ENCODE measurements at regions of chr4 and their contacts with region 1.

Region 1: DNA sequence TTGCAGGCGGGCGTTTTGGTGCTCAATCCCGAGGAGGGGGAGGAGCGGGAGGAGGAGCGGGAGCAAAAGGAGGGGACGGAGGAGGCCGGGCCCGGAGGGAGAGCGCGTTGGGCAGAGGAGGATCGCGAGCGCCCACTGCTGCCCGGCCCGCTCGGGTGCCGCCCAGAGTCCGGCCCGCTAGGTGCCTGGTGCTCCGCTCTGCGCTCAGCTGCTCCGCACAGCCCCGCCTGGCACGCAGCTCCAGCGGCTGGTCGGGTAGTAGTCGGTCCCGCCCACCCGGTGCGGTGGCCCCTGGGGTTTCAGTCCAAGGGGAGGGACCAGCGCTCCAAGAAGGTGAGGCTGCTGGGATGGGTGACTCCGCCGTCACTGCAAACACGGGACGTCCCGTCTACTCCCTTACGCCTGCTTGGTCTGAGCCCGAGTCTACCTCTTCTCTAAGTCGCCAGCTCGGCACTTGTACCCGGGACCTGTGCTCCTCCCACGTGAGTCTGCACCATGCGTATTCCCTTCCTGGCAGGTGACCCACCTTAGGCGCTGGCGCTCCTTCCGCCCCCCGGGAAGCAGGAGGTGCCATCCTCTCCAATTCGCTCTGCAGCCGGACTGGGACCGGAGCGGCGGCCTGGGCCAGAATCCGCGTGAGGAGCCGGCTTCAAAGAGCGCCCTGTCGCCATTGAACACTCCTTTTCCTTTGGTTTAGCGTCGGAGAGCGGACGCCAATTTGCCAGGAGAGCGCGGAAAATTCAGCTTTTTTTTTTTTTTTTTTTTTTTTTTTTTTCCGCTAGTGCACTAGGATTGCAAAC is 405 bp upstream of the HS3ST1 start:
- DNase-seq: peak; percentile 54 to 94 (median 79)
- H3K4me3 ChIP-seq: peak overlapping the region; percentile 37 to 85 (median 72)
- H3K27ac ChIP-seq: peak overlapping the region in 51 of 59 donors; percentile 21 to 90 (median 80)
- H3K27me3 ChIP-seq: peaks cover 0 to 28% (median 6%) of the 10 kb centered on the region in 45 donors
- CTCF ChIP-seq: peak; percentile 38 to 81 (median 64)

Region 2: GRCh38 chr4:10582059-10582686 is 846.9 kb before region 1 on chr4:
- intact Hi-C with region 1: loop called (anchors 5 to 10 kb)
- DNase-seq: peak in 8 of 10 donors; percentile 17 to 73 (median 50)
- H3K4me3 ChIP-seq: no peak overlapping the region
- H3K27ac ChIP-seq: no peak overlapping the region
- H3K27me3 ChIP-seq: peaks cover 0 to 6% (median 0%) of the 10 kb centered on the region in 45 donors
- CTCF ChIP-seq: peak in 55 of 56 donors; percentile 68 to 93 (median 81)

Region 3: GRCh38 chr4:11685481-11685880 is 256.4 kb after region 1 on chr4:
- intact Hi-C with region 1: no loop called
- DNase-seq: no peak
- H3K4me3 ChIP-seq: no peak overlapping the region
- H3K27ac ChIP-seq: no peak overlapping the region
- H3K27me3 ChIP-seq: peaks cover 0 to 6% (median 0%) of the 10 kb centered on the region in 45 donors
- CTCF ChIP-seq: no peak